ENCODE measurements at regions of chr19 and their contacts with region 1.

Region 1: DNA sequence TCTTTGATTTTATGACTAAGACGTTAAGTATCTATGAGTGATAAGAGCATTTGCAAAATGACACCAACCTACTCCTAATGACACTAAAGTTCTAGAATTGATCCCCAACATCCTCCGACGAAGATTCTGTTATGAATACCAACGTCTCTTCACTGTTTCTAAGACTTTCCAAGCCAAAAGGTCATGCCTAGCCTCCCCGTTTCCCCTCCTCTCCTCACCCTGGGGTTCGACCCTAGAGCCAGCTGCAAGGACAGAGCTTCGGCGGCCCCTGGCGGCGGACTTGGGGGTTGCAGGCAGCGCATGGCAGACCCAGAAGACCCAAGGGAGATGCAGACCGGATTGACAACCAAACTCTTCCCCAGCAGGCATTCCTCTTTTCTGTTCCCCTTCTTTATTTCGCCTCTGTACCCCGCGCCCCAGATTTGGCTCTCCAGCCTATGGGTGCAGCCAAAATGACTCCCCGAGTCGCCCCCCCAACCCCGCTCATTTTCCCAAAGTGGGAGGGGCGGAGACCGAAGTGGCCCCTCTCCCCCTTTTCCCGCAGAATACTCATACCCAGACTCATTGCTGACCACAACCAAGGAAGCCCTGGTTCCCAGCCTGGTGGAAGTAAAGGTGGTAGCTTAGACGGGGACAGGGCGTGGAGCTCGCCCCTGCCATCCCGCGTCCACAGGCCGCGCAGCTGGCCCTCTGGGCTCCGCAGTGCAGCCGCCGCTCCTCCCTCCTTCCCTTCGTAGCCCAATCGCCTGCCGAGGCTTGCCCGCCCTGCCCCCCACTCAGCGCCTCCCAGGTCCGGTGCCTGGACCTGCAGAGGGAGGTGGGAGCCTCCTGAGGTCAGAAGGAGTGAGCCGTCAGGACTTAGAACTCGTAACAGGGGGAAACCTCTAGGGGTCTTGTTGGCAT is 4.1 kb upstream of the EML2 start:
- DNase-seq: peak; percentile 94
- H3K4me3 Mint-ChIP-seq: peak overlapping the region; percentile 63
- H3K27ac Mint-ChIP-seq: peak overlapping the region; percentile 89
- H3K4me1 Mint-ChIP-seq: peaks cover 50% of the 10 kb centered on the region
- H3K27me3 Mint-ChIP-seq: peaks cover 15% of the 10 kb centered on the region
- CTCF ChIP-seq: peak; percentile 99

Region 2: GRCh38 chr19:45506246-45506990 is 136.9 kb before region 1 on chr19:
- CTCF ChIA-PET with region 1: interaction called, 6 read pairs
- intact Hi-C with region 1: loop called (anchors 5 kb)
- DNase-seq: peak; percentile 99
- H3K4me3 Mint-ChIP-seq: peak overlapping the region; percentile 84
- H3K27ac Mint-ChIP-seq: peak overlapping the region; percentile 98
- H3K4me1 Mint-ChIP-seq: peaks cover 33% of the 10 kb centered on the region
- H3K27me3 Mint-ChIP-seq: no peaks in the 10 kb centered on the region
- CTCF ChIP-seq: no peak

Region 3: GRCh38 chr19:45577111-45577905 is 66.0 kb before region 1 on chr19:
- CTCF ChIA-PET with region 1: interaction called, 19 read pairs
- intact Hi-C with region 1: no loop called
- DNase-seq: peak; percentile 84
- H3K4me3 Mint-ChIP-seq: peak overlapping the region; percentile 36
- H3K27ac Mint-ChIP-seq: peak overlapping the region; percentile 77
- H3K4me1 Mint-ChIP-seq: peaks cover 44% of the 10 kb centered on the region
- H3K27me3 Mint-ChIP-seq: no peaks in the 10 kb centered on the region
- CTCF ChIP-seq: no peak

Region 4: DNA sequence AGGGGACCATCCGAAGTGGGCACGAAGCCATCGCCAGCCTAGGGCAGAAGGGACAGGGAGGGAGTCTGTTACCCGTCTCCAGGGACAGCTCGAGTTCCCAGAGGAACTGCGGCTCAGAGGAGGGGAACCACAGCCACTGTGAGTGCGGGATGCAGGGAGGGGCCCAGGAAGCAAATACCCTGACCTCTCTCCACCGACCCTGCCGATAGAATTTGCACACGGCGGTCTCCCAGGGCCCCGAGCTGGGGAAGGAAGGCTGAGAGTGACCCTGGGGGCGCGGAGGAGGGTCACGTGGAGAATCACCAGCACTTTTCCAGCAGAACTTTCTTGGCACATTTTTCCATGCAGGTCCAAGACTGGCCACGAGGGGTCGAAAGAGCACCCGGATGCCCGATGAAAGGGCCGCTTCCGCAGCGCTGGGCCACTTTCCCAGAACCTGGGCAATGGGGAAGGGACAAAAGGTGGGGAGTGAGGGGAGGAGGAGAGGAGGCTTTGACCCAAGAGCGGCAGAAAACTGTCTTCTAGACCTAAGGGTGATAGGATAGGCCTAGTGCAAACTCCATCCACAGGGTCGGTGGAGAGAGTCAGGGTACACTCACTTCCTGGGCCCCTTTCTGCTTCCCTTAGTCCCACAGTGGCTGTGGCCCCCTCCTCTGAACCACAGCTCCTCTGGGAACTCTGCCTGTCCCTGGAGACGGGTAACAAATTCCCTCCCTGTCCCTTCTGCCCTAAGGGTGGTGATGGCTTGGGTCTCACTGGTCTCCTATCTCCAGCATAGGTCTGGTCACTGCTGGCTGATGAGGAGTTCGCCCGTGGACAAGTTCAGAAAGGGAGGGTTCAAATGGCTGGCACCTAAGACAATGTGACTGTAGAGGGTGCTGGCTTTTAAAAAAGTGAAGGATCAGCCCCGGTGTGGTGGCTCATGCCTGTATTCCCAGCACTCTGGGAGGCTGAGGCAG is 35.9 kb before region 1 on chr19:
- CTCF ChIA-PET with region 1: interaction called, 18 read pairs
- intact Hi-C with region 1: loop called (anchors 1 kb)
- DNase-seq: peak; percentile 84
- H3K4me3 Mint-ChIP-seq: peak overlapping the region; percentile 46
- H3K27ac Mint-ChIP-seq: peak overlapping the region; percentile 60
- H3K4me1 Mint-ChIP-seq: peaks cover 14% of the 10 kb centered on the region
- H3K27me3 Mint-ChIP-seq: peaks cover 12% of the 10 kb centered on the region
- CTCF ChIP-seq: peak; percentile 88

Region 5: GRCh38 chr19:45681391-45682015 is 38.2 kb after region 1 on chr19:
- CTCF ChIA-PET with region 1: interaction called, 35 read pairs
- intact Hi-C with region 1: no loop called
- DNase-seq: peak; percentile 96
- H3K4me3 Mint-ChIP-seq: peak overlapping the region; percentile 73
- H3K27ac Mint-ChIP-seq: peak overlapping the region; percentile 11
- H3K4me1 Mint-ChIP-seq: peaks cover 8% of the 10 kb centered on the region
- H3K27me3 Mint-ChIP-seq: no peaks in the 10 kb centered on the region
- CTCF ChIP-seq: peak; percentile 99

Region 6: GRCh38 chr19:45774765-45775164 is 131.5 kb after region 1 on chr19:
- CTCF ChIA-PET with region 1: no interaction called
- intact Hi-C with region 1: no loop called
- DNase-seq: peak; percentile 38
- H3K4me3 Mint-ChIP-seq: no peak overlapping the region
- H3K27ac Mint-ChIP-seq: no peak overlapping the region
- H3K4me1 Mint-ChIP-seq: peaks cover 16% of the 10 kb centered on the region
- H3K27me3 Mint-ChIP-seq: no peaks in the 10 kb centered on the region
- CTCF ChIP-seq: no peak